H1 (cell line): ENCODE measurements at regions of chr16 and their contacts with region 1.

Region 1: GRCh38 chr16:56964243-56965148 is 2.7 kb downstream of the CETP start:
- DNase-seq: peak; percentile 88 to 100
- H3K4me3 ChIP-seq: no peak overlapping the region
- H3K27ac ChIP-seq: no peak overlapping the region
- H3K4me1 ChIP-seq: peaks cover 0 to 2% (median 1%) of the 10 kb centered on the region in 4 experiments; a peak in 4 of 7 replicates
- H3K27me3 ChIP-seq: no peaks in the 10 kb centered on the region; a peak in 1 of 7 replicates
- CTCF ChIP-seq: peak; percentile 98 to 100 (median 99)
- EP300 ChIP-seq: peak in 1 of 2 experiments; percentile 62; a peak in 1 of 3 replicates
- POLR2A ChIP-seq: no peak
- RAD21 ChIP-seq: peak; percentile 79 to 86

Region 2: GRCh38 chr16:56866943-56867830 is 97.3 kb before region 1 on chr16:
- CTCF ChIA-PET with region 1: interaction called, 12 read pairs
- POLR2A ChIA-PET with region 1: no interaction called
- DNase-seq: peak in 1 of 2 experiments; percentile 63
- H3K4me3 ChIP-seq: no peak overlapping the region
- H3K27ac ChIP-seq: no peak overlapping the region
- H3K4me1 ChIP-seq: no peaks in the 10 kb centered on the region
- H3K27me3 ChIP-seq: no peaks in the 10 kb centered on the region
- CTCF ChIP-seq: peak in 2 of 3 experiments; percentile 50 to 70; a peak in 3 of 4 replicates
- EP300 ChIP-seq: no peak
- POLR2A ChIP-seq: no peak
- RAD21 ChIP-seq: peak; percentile 53 to 71

Region 3: DNA sequence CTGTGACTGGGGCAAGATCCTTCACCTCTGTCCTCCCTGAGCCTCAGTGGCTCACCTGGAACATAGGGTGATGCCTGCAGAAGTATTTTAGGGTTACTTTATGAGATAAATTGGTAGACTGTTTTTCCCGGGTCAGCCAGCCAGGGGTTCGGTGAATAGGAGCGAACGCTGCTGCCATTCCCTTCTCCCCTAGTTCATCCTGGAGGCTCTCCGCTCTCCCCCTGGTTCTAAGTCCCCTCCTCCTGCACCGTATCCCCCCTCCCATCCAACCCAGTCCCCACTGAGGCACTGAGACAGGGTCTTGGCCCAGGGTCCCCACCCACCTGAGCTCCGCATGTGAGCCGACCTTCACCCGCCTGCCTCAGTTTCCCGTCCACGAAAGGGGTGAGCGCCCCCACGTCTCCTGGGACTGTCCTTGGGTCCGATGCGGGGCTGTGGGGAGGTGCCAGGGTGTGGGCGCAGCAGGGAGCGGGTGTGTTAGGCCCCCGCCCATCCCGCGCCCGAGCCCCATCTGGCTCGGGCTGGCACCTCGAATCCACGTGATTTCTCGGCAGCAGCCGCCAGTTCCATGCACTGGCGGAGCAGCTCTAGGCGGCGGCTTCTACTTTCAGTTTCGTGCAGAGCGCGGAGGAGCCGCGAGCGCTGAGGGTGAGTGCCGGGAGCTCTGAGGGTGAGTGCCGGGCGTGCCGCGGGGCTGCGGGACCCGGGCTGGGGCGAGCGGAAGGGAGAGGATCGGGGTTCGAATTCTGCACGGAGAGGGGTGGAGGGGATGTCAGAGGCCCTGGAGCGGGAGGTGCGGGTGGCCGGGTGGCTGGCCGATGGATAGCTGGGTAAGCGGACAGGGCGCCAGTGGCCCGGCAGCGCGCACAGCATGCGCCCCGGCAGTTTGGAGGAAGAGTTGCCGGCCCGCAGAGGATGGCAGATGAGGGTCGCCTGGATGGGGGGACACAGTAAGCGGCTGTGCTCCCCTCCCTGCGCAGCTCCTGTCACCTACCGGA is 24.8 kb after region 1 on chr16 and contains the start of gene NLRC5:
- CTCF ChIA-PET with region 1: interaction called, 67 read pairs
- POLR2A ChIA-PET with region 1: interaction called, 3 read pairs
- DNase-seq: peak in 1 of 2 experiments; percentile 76
- H3K4me3 ChIP-seq: peak within 1 kb of the TSS; percentile 43 to 78 (median 56)
- H3K27ac ChIP-seq: no peak within 1 kb of the TSS
- H3K4me1 ChIP-seq: peaks cover 0 to 7% (median 3%) of the 10 kb centered on the region in 4 experiments; a peak in 3 of 7 replicates
- H3K27me3 ChIP-seq: peaks cover 0 to 33% (median 25%) of the 10 kb centered on the region in 4 experiments; a peak in 6 of 7 replicates
- CTCF ChIP-seq: no peak
- EP300 ChIP-seq: no peak
- POLR2A ChIP-seq: no peak
- RAD21 ChIP-seq: no peak
- total RNA-seq, gene NLRC5: 2.8 and 3.2 TPM in 2 replicates

Region 4: GRCh38 chr16:57023541-57024249 is 59.2 kb after region 1 on chr16:
- CTCF ChIA-PET with region 1: interaction called, 11 read pairs
- POLR2A ChIA-PET with region 1: no interaction called
- DNase-seq: no peak
- H3K4me3 ChIP-seq: no peak overlapping the region
- H3K27ac ChIP-seq: no peak overlapping the region
- H3K4me1 ChIP-seq: no peaks in the 10 kb centered on the region
- H3K27me3 ChIP-seq: no peaks in the 10 kb centered on the region
- CTCF ChIP-seq: no peak
- EP300 ChIP-seq: no peak
- POLR2A ChIP-seq: no peak
- RAD21 ChIP-seq: no peak

Region 5: GRCh38 chr16:57038166-57038565 is 73.7 kb after region 1 on chr16:
- CTCF ChIA-PET with region 1: interaction called, 13 read pairs
- POLR2A ChIA-PET with region 1: no interaction called
- DNase-seq: no peak
- H3K4me3 ChIP-seq: no peak overlapping the region
- H3K27ac ChIP-seq: no peak overlapping the region
- H3K4me1 ChIP-seq: no peaks in the 10 kb centered on the region
- H3K27me3 ChIP-seq: no peaks in the 10 kb centered on the region
- CTCF ChIP-seq: no peak
- EP300 ChIP-seq: no peak
- POLR2A ChIP-seq: no peak
- RAD21 ChIP-seq: no peak

Region 6: GRCh38 chr16:57066625-57067024 is 102.1 kb after region 1 on chr16:
- CTCF ChIA-PET with region 1: interaction called, 10 read pairs
- POLR2A ChIA-PET with region 1: no interaction called
- DNase-seq: no peak
- H3K4me3 ChIP-seq: no peak overlapping the region
- H3K27ac ChIP-seq: no peak overlapping the region
- H3K4me1 ChIP-seq: peaks cover 0 to 3% (median 0%) of the 10 kb centered on the region in 4 experiments; a peak in 1 of 7 replicates
- H3K27me3 ChIP-seq: no peaks in the 10 kb centered on the region
- CTCF ChIP-seq: no peak
- EP300 ChIP-seq: no peak
- POLR2A ChIP-seq: no peak
- RAD21 ChIP-seq: no peak